ENCODE measurements at regions of chr16 and their contacts with region 1.

Region 1: DNA sequence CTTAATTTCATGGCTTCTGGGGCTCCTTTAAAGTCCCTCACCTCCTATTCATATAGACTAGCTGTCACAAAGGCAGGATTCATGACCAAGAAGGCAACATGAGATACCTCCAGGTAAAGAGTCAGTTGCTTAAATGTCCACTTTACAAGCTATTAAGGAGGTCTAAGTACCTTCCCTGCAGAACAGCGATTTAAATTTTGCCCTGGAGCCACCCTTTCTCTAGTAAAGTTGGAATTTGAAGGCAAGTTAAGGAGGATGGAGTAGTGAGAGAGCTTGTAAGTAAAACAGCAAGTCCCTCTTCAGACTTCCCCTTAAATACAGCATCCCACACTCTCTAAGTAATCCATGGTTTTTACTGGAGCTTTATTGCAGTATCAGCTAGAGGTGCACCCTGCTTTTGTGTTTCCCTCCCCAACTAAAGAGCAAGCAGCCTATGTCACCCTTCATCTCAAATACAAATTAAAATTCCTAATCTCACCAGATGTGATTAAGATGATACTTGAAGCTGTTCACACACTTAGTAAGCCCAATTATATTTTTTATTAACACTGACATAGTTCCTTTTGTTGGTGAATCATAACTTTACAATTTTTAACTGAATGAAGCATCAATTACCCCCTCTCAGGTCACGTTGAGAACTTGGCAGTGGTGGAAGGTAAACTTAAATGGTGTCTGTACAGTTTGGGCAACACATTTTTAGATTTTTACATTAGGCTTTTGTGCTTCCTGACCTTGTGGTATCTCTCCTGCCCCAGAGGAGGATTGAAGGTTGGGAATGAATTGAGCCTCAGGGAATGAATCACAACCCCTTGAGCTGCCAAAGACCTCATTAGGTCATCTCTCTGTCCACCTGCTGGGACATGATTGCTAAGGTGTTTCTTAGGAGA is 108.9 kb downstream of the TANGO6 start:
- DNase-seq: no peak
- ATAC-seq: no peak
- H3K4me3 Mint-ChIP-seq: no peak overlapping the region
- H3K27ac Mint-ChIP-seq: no peak overlapping the region
- H3K4me1 Mint-ChIP-seq: no peaks in the 10 kb centered on the region
- H3K27me3 Mint-ChIP-seq: no peaks in the 10 kb centered on the region
- CTCF ChIP-seq: no peak

Region 2: GRCh38 chr16:68893710-68894705 is 58.2 kb before region 1 on chr16:
- CTCF ChIA-PET with region 1: no interaction called
- POLR2A ChIA-PET with region 1: no interaction called
- intact Hi-C with region 1: loop called (anchors 10 kb)
- DNase-seq: no peak
- ATAC-seq: no peak
- H3K4me3 Mint-ChIP-seq: no peak overlapping the region
- H3K27ac Mint-ChIP-seq: no peak overlapping the region
- H3K4me1 Mint-ChIP-seq: peaks cover 1% of the 10 kb centered on the region
- H3K27me3 Mint-ChIP-seq: no peaks in the 10 kb centered on the region
- CTCF ChIP-seq: no peak

Region 3: GRCh38 chr16:68935008-68935407 is 17.2 kb before region 1 on chr16:
- CTCF ChIA-PET with region 1: no interaction called
- POLR2A ChIA-PET with region 1: no interaction called
- intact Hi-C with region 1: no loop called
- DNase-seq: no peak
- ATAC-seq: no peak
- H3K4me3 Mint-ChIP-seq: no peak overlapping the region
- H3K27ac Mint-ChIP-seq: no peak overlapping the region
- H3K4me1 Mint-ChIP-seq: no peaks in the 10 kb centered on the region
- H3K27me3 Mint-ChIP-seq: no peaks in the 10 kb centered on the region
- CTCF ChIP-seq: no peak

Measured in activated CD8-positive, alpha-beta T cell treated with anti-CD3 and anti-CD28 coated beads for 36 hours (primary cell).